ENCODE measurements at regions of chr11 and their contacts with region 1.

Region 1: DNA sequence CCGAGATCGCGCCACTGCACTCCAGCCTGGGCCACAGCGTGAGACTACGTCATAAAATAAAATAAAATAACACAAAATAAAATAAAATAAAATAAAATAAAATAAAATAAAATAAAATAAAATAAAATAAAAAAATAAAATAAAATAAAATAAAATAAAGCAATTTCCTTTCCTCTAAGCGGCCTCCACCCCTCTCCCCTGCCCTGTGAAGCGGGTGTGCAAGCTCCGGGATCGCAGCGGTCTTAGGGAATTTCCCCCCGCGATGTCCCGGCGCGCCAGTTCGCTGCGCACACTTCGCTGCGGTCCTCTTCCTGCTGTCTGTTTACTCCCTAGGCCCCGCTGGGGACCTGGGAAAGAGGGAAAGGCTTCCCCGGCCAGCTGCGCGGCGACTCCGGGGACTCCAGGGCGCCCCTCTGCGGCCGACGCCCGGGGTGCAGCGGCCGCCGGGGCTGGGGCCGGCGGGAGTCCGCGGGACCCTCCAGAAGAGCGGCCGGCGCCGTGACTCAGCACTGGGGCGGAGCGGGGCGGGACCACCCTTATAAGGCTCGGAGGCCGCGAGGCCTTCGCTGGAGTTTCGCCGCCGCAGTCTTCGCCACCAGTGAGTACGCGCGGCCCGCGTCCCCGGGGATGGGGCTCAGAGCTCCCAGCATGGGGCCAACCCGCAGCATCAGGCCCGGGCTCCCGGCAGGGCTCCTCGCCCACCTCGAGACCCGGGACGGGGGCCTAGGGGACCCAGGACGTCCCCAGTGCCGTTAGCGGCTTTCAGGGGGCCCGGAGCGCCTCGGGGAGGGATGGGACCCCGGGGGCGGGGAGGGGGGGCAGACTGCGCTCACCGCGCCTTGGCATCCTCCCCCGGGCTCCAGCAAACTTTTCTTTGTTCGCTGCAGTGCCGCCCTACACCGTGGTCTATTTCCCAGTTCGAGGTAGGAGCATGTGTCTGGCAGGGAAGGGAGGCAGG is at the start of gene GSTP1:
- DNase-seq: peak; percentile 95
- total RNA-seq, gene GSTP1: 272 TPM

Region 2: DNA sequence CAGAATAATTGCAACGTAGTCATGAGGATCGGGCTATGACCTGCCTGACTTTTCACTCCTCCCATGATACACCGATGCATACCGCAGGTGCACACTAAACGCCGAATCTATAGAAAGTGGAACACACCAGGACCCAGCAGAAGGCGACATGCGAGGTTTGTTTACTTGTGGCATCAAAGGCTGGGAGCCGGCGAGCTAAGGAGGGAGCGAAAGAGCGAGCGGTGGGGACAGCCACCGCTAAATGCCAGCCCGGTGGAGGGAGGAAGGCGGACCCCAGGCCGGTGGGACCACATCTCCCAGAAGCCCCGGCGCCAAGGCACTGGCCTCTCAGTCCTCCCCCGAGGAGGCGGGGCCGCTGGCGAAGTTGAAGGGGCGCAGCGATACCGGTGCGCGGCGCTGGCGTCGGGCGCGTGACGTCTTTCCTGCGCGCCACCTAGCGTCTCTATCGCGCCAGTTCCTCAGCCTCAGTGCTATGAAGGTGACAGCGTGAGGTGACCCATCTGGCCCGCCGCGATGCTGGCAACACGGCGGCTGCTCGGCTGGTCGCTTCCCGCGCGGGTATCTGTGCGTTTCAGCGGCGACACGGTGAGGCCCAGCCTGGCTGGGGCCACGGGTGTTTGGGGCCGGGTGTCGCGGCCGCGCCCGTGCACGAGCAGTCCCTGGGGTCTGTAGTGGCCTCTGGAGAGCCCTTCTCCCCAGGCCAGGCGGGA is 23.1 kb after region 1 on chr11 and contains the start of gene NDUFV1:
- intact Hi-C with region 1: loop called (anchors 1 kb)
- DNase-seq: peak; percentile 98
- total RNA-seq, gene NDUFV1: 486 TPM

Region 3: GRCh38 chr11:67629386-67630227 is 46.1 kb after region 1 on chr11 and contains the start of gene NUDT8:
- intact Hi-C with region 1: loop called (anchors 5 kb)
- DNase-seq: peak; percentile 92
- total RNA-seq, gene NUDT8: 31.4 TPM

Measured in cardiac septum (tissue), 1 donor.